ENCODE measurements at regions of chr12 and their contacts with region 1.

Region 1: DNA sequence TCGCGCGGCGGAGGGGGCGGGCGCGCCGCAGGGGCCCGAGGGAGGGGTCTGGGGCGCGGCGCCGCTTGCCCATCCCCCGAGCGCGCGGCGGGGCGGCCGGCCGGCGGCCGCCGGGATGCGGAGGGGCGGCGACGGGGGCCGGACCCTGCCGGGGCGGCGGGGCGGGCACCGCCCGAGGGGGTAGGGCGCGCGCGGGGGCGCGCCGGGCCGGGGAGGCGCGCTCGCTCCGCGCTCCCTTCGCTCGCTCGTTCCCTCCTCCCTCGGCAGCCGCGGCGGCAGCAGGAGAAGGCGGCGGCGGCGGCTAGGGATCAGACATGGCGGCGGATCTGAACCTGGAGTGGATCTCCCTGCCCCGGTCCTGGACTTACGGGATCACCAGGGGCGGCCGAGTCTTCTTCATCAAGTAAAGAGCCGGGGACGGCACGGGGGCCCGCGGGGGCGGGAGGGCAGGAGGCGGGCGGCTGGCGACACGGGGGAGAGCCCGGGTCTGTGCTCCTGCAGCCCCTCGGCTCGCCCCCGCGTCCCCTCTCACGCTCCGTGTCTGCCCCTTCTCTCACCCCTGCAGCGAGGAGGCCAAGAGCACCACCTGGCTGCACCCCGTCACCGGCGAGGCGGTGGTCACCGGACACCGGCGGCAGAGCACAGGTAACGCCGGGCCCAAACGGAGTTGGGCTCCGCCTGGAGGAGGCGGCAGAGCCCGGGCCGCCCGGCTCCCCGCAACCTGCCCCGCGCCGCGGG is at the start of gene PLEKHA5:
- DNase-seq: peak; percentile 63
- H3K4me3 ChIP-seq: peak within 1 kb of the TSS; percentile 66 to 96 (median 67)
- H3K27ac ChIP-seq: peak within 1 kb of the TSS; percentile 78
- H3K4me1 ChIP-seq: peaks cover 13% of the 10 kb centered on the region
- H3K27me3 ChIP-seq: no peaks in the 10 kb centered on the region
- CTCF ChIP-seq: peak in 1 of 2 donors; percentile 55
- total RNA-seq, gene PLEKHA5: 54.3 to 76.5 TPM

Region 2: DNA sequence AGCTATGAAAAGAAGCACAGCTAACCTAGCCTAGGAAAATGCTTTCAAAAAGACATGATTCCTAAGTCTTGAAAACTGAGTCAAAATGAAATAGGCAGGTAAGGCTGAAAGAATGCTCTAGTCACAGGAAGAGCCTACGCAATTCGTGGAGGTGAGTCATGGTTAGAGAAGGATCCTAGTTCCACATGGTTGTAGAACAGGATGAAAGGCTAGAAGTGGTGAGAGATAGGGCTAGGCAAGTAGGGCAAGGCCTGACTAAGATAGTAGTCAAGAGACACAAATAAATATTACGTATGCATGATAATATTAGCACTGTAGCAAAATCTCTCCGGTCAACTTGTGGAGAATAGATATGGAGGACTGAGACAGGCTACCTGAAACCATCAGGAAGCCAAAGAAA is 439.0 kb before region 1 on chr12:
- CTCF ChIA-PET with region 1: no interaction called
- dilution Hi-C with region 1: no loop called
- in situ Hi-C with region 1: no loop called
- intact Hi-C with region 1: loop called (anchors 10 kb)
- DNase-seq: peak; percentile 99
- H3K4me3 ChIP-seq: no peak overlapping the region
- H3K27ac ChIP-seq: peak overlapping the region; percentile 96
- H3K4me1 ChIP-seq: peaks cover 21% of the 10 kb centered on the region
- H3K27me3 ChIP-seq: no peaks in the 10 kb centered on the region
- CTCF ChIP-seq: no peak

Region 3: DNA sequence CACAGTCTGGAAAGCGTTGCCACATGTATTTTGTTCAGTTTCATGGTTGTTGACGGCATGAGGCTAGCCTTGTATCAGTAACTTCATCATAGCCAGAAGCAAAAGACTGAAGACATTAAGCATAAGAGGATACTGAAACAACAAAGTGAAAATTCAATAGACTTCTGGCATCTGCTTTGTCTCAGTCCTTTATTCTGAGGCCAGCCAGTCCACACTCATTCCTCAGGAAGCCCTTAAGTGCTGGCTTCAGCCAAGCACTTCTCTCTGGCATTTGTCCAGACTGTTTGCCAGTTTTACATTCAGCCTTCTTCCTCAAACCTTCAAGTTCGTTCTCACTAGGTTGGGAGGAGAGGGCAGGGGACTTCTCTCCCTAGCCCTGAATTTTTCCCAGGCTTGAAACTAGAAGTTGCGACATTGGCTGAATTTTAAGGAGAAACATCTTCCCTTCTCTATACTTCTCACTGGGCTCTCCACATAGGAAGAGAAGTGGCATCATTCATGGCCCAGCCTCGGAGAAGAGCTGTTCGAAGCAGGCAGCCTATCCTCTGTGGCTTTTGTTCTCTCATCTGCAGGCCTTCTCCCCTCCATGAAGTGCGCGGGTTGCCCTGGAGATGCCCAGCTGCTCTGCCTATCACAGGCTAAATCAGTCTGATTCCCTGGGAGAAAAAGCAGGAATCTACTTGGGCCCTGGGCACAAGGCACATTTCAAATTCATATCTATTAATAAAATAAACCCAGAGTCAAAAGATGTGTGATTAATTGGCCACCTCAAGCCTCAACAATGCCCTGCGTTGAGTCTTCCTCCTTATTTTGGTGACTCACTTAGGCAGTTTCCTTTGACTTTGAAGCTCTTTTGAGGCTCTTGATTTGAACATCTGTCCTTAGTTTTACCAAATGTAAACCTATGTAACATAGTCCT is 131.1 kb before region 1 on chr12:
- CTCF ChIA-PET with region 1: no interaction called
- dilution Hi-C with region 1: no loop called
- in situ Hi-C with region 1: no loop called
- intact Hi-C with region 1: loop called (anchors 2 kb)
- DNase-seq: peak; percentile 86
- H3K4me3 ChIP-seq: peak overlapping the region in 2 of 3 experiments; percentile 16 to 50
- H3K27ac ChIP-seq: peak overlapping the region; percentile 99
- H3K4me1 ChIP-seq: peaks cover 29% of the 10 kb centered on the region
- H3K27me3 ChIP-seq: no peaks in the 10 kb centered on the region
- CTCF ChIP-seq: no peak

Region 4: GRCh38 chr12:19031032-19031431 is 98.6 kb before region 1 on chr12:
- CTCF ChIA-PET with region 1: no interaction called
- dilution Hi-C with region 1: no loop called
- in situ Hi-C with region 1: no loop called
- intact Hi-C with region 1: loop called (anchors 2 kb)
- DNase-seq: peak; percentile 94
- H3K4me3 ChIP-seq: peak overlapping the region in 2 of 3 experiments; percentile 17 to 25
- H3K27ac ChIP-seq: peak overlapping the region; percentile 99
- H3K4me1 ChIP-seq: peaks cover 23% of the 10 kb centered on the region
- H3K27me3 ChIP-seq: no peaks in the 10 kb centered on the region
- CTCF ChIP-seq: no peak

Region 5: DNA sequence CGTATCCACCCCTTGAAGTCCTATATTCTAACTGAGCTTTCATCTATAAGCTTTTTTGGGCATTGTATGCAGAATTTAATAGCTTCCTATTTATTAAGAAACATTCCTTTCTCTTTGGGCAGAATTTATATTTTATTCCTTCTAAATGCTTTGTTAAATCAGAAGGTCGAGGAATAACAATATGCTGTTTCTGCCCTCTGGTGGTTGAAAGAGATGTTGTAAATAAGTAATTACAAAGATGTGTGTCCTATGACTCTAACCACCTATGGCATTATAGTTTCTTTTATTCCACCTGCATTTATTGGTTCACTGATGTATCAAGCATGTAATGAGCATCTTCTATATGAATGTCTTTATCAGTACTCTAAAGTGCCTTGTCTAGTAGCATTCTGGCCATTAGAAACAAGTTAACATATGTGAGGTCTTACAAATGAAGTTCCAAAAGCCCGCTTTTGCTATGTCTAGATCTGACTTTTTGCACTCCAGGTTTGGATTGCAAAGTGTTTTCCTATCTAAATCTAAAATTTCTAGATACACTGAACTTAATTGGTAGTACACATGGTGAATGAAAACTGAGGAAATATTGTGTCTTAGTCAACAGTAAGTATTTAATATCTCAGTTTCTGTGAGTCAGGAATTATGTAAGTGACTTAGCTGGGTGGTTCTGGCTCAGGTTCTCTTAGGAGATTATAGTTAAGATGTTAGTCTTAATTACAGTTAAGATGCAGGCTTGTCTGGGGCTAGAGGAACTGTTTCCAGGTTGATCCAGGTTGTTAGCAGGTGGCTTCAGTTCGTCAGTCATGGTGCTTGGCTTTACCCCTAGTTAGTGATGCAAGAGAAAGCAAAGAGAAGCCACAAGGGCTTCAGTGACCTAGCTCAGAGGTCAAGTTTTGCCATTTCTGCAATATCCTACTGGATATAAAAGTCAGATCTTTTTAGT is 57.3 kb after region 1 on chr12:
- CTCF ChIA-PET with region 1: interaction called, 3 read pairs
- dilution Hi-C with region 1: no loop called
- in situ Hi-C with region 1: no loop called
- intact Hi-C with region 1: loop called (anchors 1 kb)
- DNase-seq: peak; percentile 55
- H3K4me3 ChIP-seq: no peak overlapping the region
- H3K27ac ChIP-seq: no peak overlapping the region
- H3K4me1 ChIP-seq: peaks cover 16% of the 10 kb centered on the region
- H3K27me3 ChIP-seq: no peaks in the 10 kb centered on the region
- CTCF ChIP-seq: peak; percentile 57 to 59

Measured in mammary epithelial cell (primary cell).